Dorsolateral prefrontal cortex (tissue), 120 donors: ENCODE measurements at regions of chr15 and their contacts with region 1.

Region 1: GRCh38 chr15:30063835-30064546 is 18.8 kb upstream of the GOLGA8J start:
- DNase-seq: no peak
- H3K4me3 ChIP-seq: no peak overlapping the region
- H3K27ac ChIP-seq: peak overlapping the region in 53 of 59 donors; percentile 5 to 95 (median 81)
- H3K27me3 ChIP-seq: no peaks in the 10 kb centered on the region
- CTCF ChIP-seq: no peak

Region 2: GRCh38 chr15:29568838-29569532 is 495.0 kb before region 1 on chr15:
- intact Hi-C with region 1: loop called in 1 of 2 experiments (anchors 10 kb)
- DNase-seq: peak in 3 of 10 donors; percentile 14 to 54 (median 15)
- H3K4me3 ChIP-seq: peak overlapping the region in 52 of 59 donors; percentile 33 to 78 (median 66)
- H3K27ac ChIP-seq: no peak overlapping the region
- H3K27me3 ChIP-seq: peaks cover 0 to 5% (median 0%) of the 10 kb centered on the region in 45 donors
- CTCF ChIP-seq: peak in 16 of 56 donors; percentile 9 to 32 (median 20)